IMR-90 (cell line): ENCODE measurements at regions of chr6 and their contacts with region 1.

Region 1: DNA sequence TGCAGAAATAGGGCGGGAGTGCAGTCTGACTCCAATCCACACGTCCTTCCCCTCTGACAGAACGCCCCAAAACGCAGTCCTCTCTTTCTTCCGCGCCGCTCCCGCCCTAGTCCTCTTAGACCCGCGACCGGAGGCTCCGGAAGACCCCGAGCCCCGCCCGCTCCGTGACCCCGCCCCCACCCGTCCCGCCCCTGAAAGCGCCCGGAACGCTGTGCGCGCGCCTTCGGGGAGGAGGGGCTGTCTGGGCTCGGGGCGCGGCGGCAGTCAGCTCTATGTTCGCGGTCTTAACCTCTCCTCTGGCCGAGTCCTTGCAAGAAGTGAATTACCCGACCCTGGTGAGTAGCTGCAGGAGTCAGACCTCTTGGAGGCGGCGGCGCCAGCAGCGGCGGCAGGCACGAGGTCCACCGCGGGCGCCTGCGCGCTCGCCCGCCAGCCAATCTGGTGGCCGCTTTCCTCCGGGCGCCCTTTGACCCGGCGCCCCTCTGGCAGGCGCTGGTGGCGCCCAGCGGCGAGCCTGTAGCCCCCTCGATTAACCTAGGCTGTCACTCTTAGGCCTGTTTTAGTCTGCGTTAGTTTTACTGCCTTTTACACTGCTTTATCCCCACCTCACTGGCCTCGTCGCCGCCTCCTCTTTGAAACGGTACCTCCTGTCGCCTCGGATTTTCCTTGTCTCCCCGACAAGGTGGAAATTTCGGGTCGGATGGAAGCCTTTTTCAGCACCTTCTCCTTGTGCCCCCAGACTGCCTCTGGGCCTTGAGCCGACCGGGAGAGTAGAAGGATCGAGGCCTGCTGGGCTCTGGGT is at the start of gene MANEA:
- DNase-seq: peak; percentile 85
- ATAC-seq: peak; percentile 93
- H3K4me3 ChIP-seq: peak within 1 kb of the TSS; percentile 99
- H3K27ac ChIP-seq: peak within 1 kb of the TSS; percentile 84
- H3K4me1 ChIP-seq: no peaks in the 10 kb centered on the region
- H3K27me3 ChIP-seq: no peaks in the 10 kb centered on the region
- CTCF ChIP-seq: no peak
- POLR2A ChIP-seq: no peak
- RAD21 ChIP-seq: no peak
- total RNA-seq, gene MANEA: 9.0 and 11.9 TPM in 2 replicates

Region 2: GRCh38 chr6:95601133-95601532 is 23.6 kb after region 1 on chr6:
- CTCF ChIA-PET with region 1: interaction called, 4 read pairs
- POLR2A ChIA-PET with region 1: no interaction called
- dilution Hi-C with region 1: no loop called
- in situ Hi-C with region 1: no loop called
- intact Hi-C with region 1: loop called (anchors 2 kb)
- DNase-seq: peak; percentile 81
- ATAC-seq: peak; percentile 90
- H3K4me3 ChIP-seq: no peak overlapping the region
- H3K27ac ChIP-seq: peak overlapping the region; percentile 36; the same call in 1 of the 2 replicates
- H3K4me1 ChIP-seq: no peaks in the 10 kb centered on the region
- H3K27me3 ChIP-seq: no peaks in the 10 kb centered on the region
- CTCF ChIP-seq: no peak
- POLR2A ChIP-seq: no peak
- RAD21 ChIP-seq: no peak

Region 3: GRCh38 chr6:96521644-96522464 is 944.3 kb after region 1 on chr6 and contains the start of gene UFL1:
- CTCF ChIA-PET with region 1: no interaction called
- POLR2A ChIA-PET with region 1: no interaction called
- dilution Hi-C with region 1: no loop called
- in situ Hi-C with region 1: no loop called
- intact Hi-C with region 1: loop called (anchors 5 kb)
- DNase-seq: peak; percentile 90
- ATAC-seq: peak; percentile 99
- H3K4me3 ChIP-seq: peak within 1 kb of the TSS; percentile 83
- H3K27ac ChIP-seq: peak within 1 kb of the TSS; percentile 98
- H3K4me1 ChIP-seq: peaks cover 2% of the 10 kb centered on the region; the same call in 1 of the 2 replicates
- H3K27me3 ChIP-seq: no peaks in the 10 kb centered on the region
- CTCF ChIP-seq: no peak
- POLR2A ChIP-seq: peak; percentile 96
- RAD21 ChIP-seq: no peak
- total RNA-seq, gene UFL1: 19.2 and 32.8 TPM in 2 replicates